Activated T-helper 1 cell treated with anti-CD3 and anti-CD28 coated beads, Interleukin-12 subunit alpha, Interleukin-12 subunit beta, Interleukin-2, Interleukin-4 antibody, amounts not matched to agents 30 ng/mL and 10 ng/mL and 1 ng/mL, durations not matched to agents 14 hours and 24 hours and 36 hours (primary cell): ENCODE measurements at regions of chr5 and their contacts with region 1.

Region 1: GRCh38 chr5:88826646-88827585 is 56.1 kb downstream of the MEF2C start:
- DNase-seq: no peak
- H3K4me3 Mint-ChIP-seq: peak overlapping the region; percentile 28
- H3K27ac Mint-ChIP-seq: peak overlapping the region; percentile 80
- H3K4me1 Mint-ChIP-seq: peaks cover 44% of the 10 kb centered on the region
- H3K27me3 Mint-ChIP-seq: peaks cover 3% of the 10 kb centered on the region

Region 2: GRCh38 chr5:88785391-88786219 is 41.3 kb before region 1 on chr5:
- intact Hi-C with region 1: loop called (anchors 2 kb)
- DNase-seq: no peak
- H3K4me3 Mint-ChIP-seq: no peak overlapping the region
- H3K27ac Mint-ChIP-seq: no peak overlapping the region
- H3K4me1 Mint-ChIP-seq: peaks cover 5% of the 10 kb centered on the region
- H3K27me3 Mint-ChIP-seq: no peaks in the 10 kb centered on the region

Region 3: GRCh38 chr5:88845081-88845697 is 18.3 kb after region 1 on chr5:
- intact Hi-C with region 1: loop called (anchors 1 kb)
- DNase-seq: no peak
- H3K4me3 Mint-ChIP-seq: no peak overlapping the region
- H3K27ac Mint-ChIP-seq: no peak overlapping the region
- H3K4me1 Mint-ChIP-seq: no peaks in the 10 kb centered on the region
- H3K27me3 Mint-ChIP-seq: peaks cover 6% of the 10 kb centered on the region